Activated naive CD4-positive, alpha-beta T cell treated with anti-CD3 and anti-CD28 coated beads for 36 hours (primary cell): ENCODE measurements at regions of chr7 and their contacts with region 1.

Region 1: DNA sequence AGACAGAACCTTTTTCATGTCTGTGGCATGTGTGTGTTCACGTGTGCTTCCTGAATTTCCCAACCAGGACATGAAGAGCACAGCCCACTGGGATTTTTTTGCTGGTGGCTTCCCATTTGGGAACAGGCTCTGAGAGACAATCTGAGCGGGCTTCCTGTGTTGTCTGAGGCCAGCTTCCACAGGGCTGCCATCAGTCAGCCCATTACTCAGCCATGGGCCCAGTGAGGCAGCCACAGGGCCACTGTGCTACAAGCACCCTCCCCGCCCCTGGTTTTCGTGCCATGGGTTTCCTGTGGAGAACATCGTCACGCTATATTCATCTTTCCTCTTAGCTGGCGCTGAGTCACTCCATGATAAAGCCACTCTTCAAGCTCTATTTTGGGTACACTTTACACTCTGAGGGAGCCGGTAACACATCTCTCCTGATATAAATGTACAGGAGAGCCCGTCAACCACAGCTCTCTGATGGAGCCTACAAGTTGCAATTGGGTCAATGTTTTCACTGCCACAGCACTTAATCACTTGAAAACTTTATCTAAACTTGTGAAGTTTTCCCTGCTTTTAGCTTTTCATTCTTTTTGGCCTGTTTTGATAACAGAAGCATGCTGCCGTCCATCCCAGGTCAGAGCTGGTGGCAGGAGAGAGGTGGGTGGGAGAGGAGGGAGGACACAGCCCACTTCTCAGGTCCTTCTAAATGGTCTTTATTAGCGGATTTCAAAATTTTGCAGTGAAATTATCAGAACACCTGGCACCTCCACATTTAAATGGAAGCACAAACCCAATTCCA is 96.9 kb downstream of the HIPK2 start:
- DNase-seq: peak; percentile 91
- H3K4me3 Mint-ChIP-seq: no peak overlapping the region
- H3K27ac Mint-ChIP-seq: peak overlapping the region; percentile 88
- H3K4me1 Mint-ChIP-seq: peaks cover 45% of the 10 kb centered on the region
- H3K27me3 Mint-ChIP-seq: no peaks in the 10 kb centered on the region

Region 2: GRCh38 chr7:139118234-139118804 is 562.5 kb before region 1 on chr7:
- CTCF ChIA-PET with region 1: no interaction called
- intact Hi-C with region 1: loop called (anchors 10 kb)
- DNase-seq: peak; percentile 76
- H3K4me3 Mint-ChIP-seq: peak overlapping the region; percentile 46
- H3K27ac Mint-ChIP-seq: peak overlapping the region; percentile 17
- H3K4me1 Mint-ChIP-seq: peaks cover 52% of the 10 kb centered on the region
- H3K27me3 Mint-ChIP-seq: no peaks in the 10 kb centered on the region

Region 3: GRCh38 chr7:139720705-139721231 is 39.9 kb after region 1 on chr7:
- CTCF ChIA-PET with region 1: no interaction called
- intact Hi-C with region 1: no loop called
- DNase-seq: peak; percentile 39
- H3K4me3 Mint-ChIP-seq: no peak overlapping the region
- H3K27ac Mint-ChIP-seq: no peak overlapping the region
- H3K4me1 Mint-ChIP-seq: peaks cover 18% of the 10 kb centered on the region
- H3K27me3 Mint-ChIP-seq: no peaks in the 10 kb centered on the region

Region 4: DNA sequence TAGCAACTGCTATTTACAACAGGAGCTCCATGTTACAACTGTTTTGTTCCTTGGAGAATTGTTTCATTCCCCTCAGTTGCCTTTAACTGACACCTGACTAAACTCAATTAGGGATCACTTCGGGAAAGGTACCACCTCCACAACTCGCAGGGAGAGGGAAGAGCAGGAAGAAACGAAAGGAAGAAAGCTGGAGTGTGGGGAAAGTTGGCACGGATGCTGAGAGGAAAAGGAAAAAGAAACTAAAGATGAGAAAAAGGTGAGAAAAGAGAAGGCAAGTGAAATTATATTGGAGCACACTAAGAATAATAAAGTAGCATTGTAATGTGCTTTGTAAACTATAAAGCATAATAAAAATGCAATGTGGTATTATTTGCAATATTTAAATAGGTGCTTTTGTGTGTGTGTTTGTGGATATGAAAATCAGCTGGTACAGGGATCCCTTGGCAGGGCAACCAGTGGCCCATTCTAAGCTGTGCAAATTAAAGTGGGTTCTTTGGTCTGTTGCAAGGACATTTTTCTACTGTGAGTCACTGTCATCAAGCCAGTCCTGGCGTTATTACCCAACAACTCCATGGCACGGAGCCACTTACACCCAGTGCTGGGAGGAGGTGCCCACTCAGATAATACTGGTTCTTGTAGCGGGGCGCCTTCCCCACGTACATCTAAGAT is 51.1 kb after region 1 on chr7:
- CTCF ChIA-PET with region 1: interaction called, 3 read pairs
- intact Hi-C with region 1: loop called (anchors 1 kb)
- DNase-seq: no peak
- H3K4me3 Mint-ChIP-seq: no peak overlapping the region
- H3K27ac Mint-ChIP-seq: no peak overlapping the region
- H3K4me1 Mint-ChIP-seq: peaks cover 52% of the 10 kb centered on the region
- H3K27me3 Mint-ChIP-seq: no peaks in the 10 kb centered on the region

Region 5: GRCh38 chr7:139767561-139767982 is 86.7 kb after region 1 on chr7:
- CTCF ChIA-PET with region 1: no interaction called
- intact Hi-C with region 1: loop called (anchors 2 kb)
- DNase-seq: peak; percentile 38
- H3K4me3 Mint-ChIP-seq: no peak overlapping the region
- H3K27ac Mint-ChIP-seq: peak overlapping the region; percentile 73
- H3K4me1 Mint-ChIP-seq: peaks cover 76% of the 10 kb centered on the region
- H3K27me3 Mint-ChIP-seq: no peaks in the 10 kb centered on the region

Region 6: DNA sequence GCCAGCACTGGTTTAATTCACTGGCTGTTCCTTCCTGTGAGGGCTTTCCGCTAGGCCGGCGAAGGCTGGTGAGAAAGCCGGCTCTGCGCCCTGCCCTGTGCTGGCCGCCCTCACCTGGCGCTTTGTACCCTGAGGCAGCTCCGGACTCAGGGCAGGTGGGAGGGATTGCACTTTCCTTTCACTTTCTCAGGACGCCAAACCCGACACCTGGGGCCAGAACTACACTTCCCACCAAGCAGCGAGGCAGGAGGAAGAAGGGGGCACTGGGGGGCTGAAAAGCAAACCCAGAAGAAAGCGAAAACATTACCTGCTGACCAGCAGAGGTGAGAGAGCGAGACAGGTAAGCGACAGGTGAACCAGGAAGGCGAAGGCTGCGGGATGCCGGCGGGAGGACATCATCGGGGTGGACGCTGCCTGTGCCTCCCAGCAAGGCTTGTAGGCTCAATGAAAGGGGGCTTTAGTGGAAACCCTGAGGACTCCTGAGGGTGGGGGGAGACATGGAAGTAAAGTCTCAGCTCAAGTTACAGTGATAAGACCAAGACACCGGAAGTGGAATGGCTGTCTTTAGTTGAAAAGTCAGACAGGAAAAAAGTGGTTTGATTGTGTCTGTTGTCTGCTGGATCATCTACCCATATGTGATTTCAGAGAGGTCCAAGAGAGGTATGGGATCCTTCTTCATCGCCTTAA is 723.2 kb after region 1 on chr7 and contains the start of gene RAB19:
- CTCF ChIA-PET with region 1: no interaction called
- intact Hi-C with region 1: loop called (anchors 5 kb)
- DNase-seq: peak; percentile 67
- H3K4me3 Mint-ChIP-seq: peak within 1 kb of the TSS; percentile 82
- H3K27ac Mint-ChIP-seq: peak within 1 kb of the TSS; percentile 86
- H3K4me1 Mint-ChIP-seq: peaks cover 27% of the 10 kb centered on the region
- H3K27me3 Mint-ChIP-seq: no peaks in the 10 kb centered on the region
- total RNA-seq, gene RAB19: 4.6 to 5.2 TPM